HepG2 (cell line): ENCODE measurements at regions of chr11 and their contacts with region 1.

Region 1: GRCh38 chr11:118198370-118198769 is 21.9 kb upstream of the SCN2B start:
- DNase-seq: peak; percentile 68
- ATAC-seq: peak; percentile 10; the same call in 1 of the 3 replicates
- H3K4me3 ChIP-seq: no peak overlapping the region
- H3K27ac ChIP-seq: peak overlapping the region; percentile 16
- H3K4me1 ChIP-seq: peaks cover 88% of the 10 kb centered on the region
- H3K27me3 ChIP-seq: no peaks in the 10 kb centered on the region
- CTCF ChIP-seq: peak; percentile 94
- EP300 ChIP-seq: no peak
- POLR2A ChIP-seq: no peak
- RAD21 ChIP-seq: peak; percentile 90

Region 2: GRCh38 chr11:118145285-118146227 is 52.8 kb before region 1 on chr11:
- CTCF ChIA-PET with region 1: no interaction called
- POLR2A ChIA-PET with region 1: no interaction called
- in situ Hi-C with region 1: no loop called
- intact Hi-C with region 1: loop called (anchors 5 kb)
- DNase-seq: peak; percentile 68
- ATAC-seq: peak; percentile 93
- H3K4me3 ChIP-seq: peak overlapping the region; percentile 60 to 80 (median 61); a peak in 5 of 6 replicates
- H3K27ac ChIP-seq: no peak overlapping the region
- H3K4me1 ChIP-seq: peaks cover 18% of the 10 kb centered on the region; the same call in 1 of the 2 replicates
- H3K27me3 ChIP-seq: peaks cover 2 to 52% of the 10 kb centered on the region in 2 experiments; a peak in 3 of 5 replicates
- CTCF ChIP-seq: peak; percentile 98
- EP300 ChIP-seq: no peak
- POLR2A ChIP-seq: no peak
- RAD21 ChIP-seq: peak; percentile 99

Region 3: GRCh38 chr11:118214210-118214914 is 16.0 kb after region 1 on chr11:
- CTCF ChIA-PET with region 1: no interaction called
- POLR2A ChIA-PET with region 1: interaction called, 49 read pairs
- in situ Hi-C with region 1: no loop called
- intact Hi-C with region 1: loop called (anchors 1 kb)
- DNase-seq: no peak
- ATAC-seq: no peak
- H3K4me3 ChIP-seq: no peak overlapping the region
- H3K27ac ChIP-seq: peak overlapping the region; percentile 95
- H3K4me1 ChIP-seq: peaks cover 72% of the 10 kb centered on the region
- H3K27me3 ChIP-seq: no peaks in the 10 kb centered on the region
- CTCF ChIP-seq: no peak
- EP300 ChIP-seq: no peak
- POLR2A ChIP-seq: no peak
- RAD21 ChIP-seq: no peak

Region 4: GRCh38 chr11:118251858-118252652 is 53.7 kb after region 1 on chr11 and contains the start of gene MPZL3:
- CTCF ChIA-PET with region 1: no interaction called
- POLR2A ChIA-PET with region 1: interaction called, 14 read pairs
- in situ Hi-C with region 1: loop called (anchors 5 kb)
- intact Hi-C with region 1: loop called (anchors 2 kb)
- DNase-seq: peak; percentile 91
- ATAC-seq: peak; percentile 94
- H3K4me3 ChIP-seq: peak within 1 kb of the TSS; percentile 88 to 98 (median 89)
- H3K27ac ChIP-seq: peak within 1 kb of the TSS; percentile 98
- H3K4me1 ChIP-seq: peaks cover 27% of the 10 kb centered on the region
- H3K27me3 ChIP-seq: no peaks in the 10 kb centered on the region; a peak in 1 of 5 replicates
- CTCF ChIP-seq: no peak
- EP300 ChIP-seq: no peak
- POLR2A ChIP-seq: peak in 1 of 2 experiments; percentile 73; a peak in 2 of 4 replicates
- RAD21 ChIP-seq: 0 out of 2 replicates have a peak, but pooled peaks have one; percentile 40
- total RNA-seq, gene MPZL3: 6.6 and 9.3 TPM in 2 replicates

Region 5: DNA sequence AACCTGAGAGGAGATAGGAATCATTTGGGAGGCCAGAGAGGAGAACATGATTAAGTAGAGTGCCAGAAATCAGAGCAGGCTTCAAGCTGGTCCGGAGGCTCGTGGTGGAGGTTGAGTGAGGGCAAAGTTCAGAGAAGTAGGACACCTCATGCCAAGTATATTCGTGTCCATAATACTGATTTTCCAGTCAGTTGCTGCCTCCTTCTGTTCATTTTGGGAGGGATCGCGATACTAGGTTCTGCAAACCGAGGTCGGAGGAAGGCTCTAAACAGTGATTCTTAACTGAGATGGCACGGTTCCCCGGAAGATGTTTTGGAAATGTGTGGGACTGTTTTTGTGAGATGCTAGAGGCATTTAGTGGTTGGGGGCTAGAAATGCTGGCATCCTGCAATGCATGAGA is 92.6 kb after region 1 on chr11:
- CTCF ChIA-PET with region 1: interaction called, 34 read pairs
- POLR2A ChIA-PET with region 1: interaction called, 3 read pairs
- in situ Hi-C with region 1: loop called (anchors 5 kb)
- intact Hi-C with region 1: loop called (anchors 1 kb)
- DNase-seq: peak; percentile 74
- ATAC-seq: peak; percentile 83
- H3K4me3 ChIP-seq: no peak overlapping the region
- H3K27ac ChIP-seq: no peak overlapping the region
- H3K4me1 ChIP-seq: peaks cover 12% of the 10 kb centered on the region
- H3K27me3 ChIP-seq: no peaks in the 10 kb centered on the region
- CTCF ChIP-seq: peak; percentile 90
- EP300 ChIP-seq: no peak
- POLR2A ChIP-seq: no peak
- RAD21 ChIP-seq: peak; percentile 89